KBM-7 (cell line): ENCODE measurements at regions of chr1 and their contacts with region 1.

Region 1: DNA sequence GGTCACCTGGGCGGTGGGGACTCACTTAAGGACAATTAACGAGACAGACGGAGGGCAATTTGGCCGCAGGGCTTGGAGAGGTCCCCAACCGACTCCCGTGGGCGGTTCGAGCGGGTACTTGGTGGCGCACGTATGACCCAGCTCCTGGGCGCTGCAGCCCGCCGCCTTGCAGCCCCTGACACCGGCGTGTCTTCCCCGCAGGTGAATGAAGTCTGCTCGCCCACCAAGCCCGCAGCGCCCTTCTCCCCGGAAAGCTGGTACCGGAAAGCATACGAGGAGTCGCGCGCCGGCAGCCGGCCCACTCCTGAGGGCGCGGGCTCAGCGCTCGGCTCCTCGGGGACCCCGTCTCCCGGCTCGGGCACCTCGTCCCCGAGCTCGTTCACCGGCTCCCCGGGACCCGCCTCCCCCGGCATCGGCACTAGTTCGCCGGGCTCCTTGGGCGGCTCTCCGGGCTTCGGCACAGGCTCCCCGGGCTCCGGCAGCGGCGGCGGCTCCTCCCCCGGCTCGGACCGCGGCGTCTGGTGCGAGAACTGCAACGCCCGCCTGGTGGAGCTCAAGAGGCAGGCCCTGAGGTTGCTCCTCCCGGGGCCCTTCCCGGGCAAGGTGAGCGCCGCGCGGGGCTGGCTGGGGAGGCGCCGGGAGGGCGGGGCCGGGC is 1.4 kb downstream of the KIF26B start:
- DNase-seq: peak; percentile 90

Region 2: DNA sequence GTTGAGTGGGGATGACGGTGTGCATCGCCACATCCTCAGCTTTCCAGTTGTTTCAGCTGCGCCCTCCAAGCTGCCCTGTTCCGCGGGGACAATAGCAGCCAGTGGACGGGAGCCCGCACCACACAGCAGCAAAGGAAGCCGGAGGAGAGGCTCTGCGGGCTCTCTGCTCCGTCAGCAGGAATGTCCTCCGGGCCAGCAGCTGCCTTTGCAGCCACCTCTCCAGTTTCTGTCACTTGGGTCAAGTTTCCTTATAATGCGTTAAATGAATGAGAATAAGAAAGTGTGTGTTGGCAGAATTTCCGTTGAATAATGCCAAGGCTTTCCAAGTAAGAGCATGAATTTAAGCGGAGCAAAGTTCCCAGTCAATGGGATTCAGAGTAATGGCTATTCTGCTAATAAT is 261.9 kb after region 1 on chr1:
- in situ Hi-C with region 1: no loop called
- DNase-seq: no peak

Region 3: DNA sequence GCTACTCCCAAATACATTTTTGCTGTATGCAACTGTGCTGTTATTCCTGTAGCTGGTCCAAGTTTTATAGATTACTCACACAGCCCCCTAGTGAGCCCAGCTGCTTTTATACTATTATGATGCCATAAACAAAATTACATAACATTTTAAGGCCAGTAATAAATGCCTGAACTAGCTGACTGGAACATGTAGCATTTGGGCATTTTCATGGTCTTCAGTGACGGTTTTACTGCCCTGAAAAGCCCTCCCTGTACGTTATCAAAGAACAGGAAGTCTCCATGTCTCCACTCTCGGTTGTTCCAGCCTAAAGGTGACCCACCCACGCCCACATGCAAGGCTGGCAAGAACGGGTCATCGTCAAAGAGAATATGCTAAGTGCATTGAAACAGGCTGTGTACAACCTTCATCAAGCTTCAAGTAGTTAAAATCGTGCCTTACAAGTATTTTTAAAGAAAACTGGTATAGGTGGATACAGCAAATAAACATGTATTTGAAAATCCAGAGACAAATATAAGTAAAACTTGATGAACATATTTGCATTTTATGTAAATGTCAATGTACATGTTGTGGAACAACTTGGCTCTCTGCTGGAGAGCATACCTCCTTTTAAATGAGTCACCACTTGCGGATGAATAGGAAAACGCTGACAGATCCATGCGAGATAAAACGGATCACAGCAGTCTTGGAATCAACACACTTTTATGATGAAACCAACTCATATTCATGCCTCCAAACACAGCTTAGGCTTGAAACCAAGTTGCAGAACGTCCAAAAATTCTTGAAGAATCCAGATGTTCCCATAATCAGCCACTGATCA is 830.4 kb after region 1 on chr1:
- in situ Hi-C with region 1: loop called (anchors 25 kb)
- DNase-seq: peak; percentile 37